Activated CD4-positive, alpha-beta T cell treated with anti-CD3 and anti-CD28 coated beads for 36 hours (primary cell): ENCODE measurements at regions of chr4 and their contacts with region 1.

Region 1: DNA sequence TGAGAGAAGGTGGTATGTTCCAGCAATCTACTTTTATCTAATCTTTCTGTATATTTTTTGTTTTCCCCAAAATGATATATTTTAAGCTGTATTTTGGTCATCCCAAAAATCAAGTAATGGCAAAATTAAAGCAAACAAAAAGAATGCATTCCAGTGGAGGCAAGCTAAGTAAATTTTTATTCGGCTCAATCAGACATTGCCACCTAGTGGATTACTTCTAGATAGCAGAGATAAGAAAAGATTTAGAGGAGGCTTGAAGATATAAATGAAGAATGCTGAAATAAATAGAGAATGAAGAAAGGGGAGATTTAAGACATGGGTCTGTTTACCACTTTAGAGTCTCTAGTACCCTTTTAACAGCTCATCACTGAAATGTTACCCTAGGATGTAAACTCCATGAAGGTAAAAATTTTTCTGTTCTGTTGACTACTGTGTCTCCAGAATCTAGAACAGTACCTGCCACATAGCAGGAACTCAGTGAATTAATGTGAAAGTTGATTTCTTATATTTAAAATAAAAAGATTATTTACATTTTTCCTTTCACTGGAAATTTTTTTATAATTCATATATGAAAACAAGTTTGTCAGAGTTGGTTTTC is 110.9 kb upstream of the ANK2 start:
- DNase-seq: no peak
- ATAC-seq: no peak
- H3K4me3 Mint-ChIP-seq: no peak overlapping the region
- H3K27ac Mint-ChIP-seq: no peak overlapping the region
- H3K4me1 Mint-ChIP-seq: no peaks in the 10 kb centered on the region
- H3K27me3 Mint-ChIP-seq: peaks cover 8% of the 10 kb centered on the region

Region 2: DNA sequence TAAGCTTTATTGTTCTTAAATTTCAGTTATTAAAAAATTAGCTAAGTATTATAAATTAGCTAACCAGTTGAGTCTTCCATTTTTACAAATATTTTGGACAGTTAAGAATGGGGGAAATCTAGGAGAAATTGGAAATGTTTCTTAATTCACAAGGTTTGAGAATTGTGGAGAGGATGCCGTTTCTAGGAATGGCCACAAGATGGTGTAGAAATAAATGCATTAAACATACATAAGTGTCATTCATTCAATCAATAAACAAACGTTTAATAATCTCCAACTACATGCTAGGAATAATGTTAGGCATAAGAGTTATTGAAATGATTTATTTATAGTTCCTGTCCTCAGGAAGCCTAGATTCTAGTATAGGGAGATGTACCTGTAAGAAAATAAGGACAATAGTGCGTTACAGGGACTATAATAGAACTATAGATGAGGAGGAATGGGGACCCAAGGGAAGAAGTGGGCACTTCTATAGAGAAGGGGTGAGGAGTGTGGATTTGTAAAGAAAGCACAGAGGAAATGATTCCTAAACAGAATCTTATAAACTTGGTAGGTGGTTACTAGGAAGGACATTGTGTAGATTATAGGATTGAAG is 84.8 kb before region 1 on chr4:
- CTCF ChIA-PET with region 1: interaction called, 4 read pairs
- POLR2A ChIA-PET with region 1: no interaction called
- intact Hi-C with region 1: loop called in 1 of 2 experiments (anchors 1 kb)
- DNase-seq: no peak
- ATAC-seq: no peak
- H3K4me3 Mint-ChIP-seq: no peak overlapping the region
- H3K27ac Mint-ChIP-seq: no peak overlapping the region
- H3K4me1 Mint-ChIP-seq: no peaks in the 10 kb centered on the region
- H3K27me3 Mint-ChIP-seq: peaks cover 11% of the 10 kb centered on the region

Region 3: DNA sequence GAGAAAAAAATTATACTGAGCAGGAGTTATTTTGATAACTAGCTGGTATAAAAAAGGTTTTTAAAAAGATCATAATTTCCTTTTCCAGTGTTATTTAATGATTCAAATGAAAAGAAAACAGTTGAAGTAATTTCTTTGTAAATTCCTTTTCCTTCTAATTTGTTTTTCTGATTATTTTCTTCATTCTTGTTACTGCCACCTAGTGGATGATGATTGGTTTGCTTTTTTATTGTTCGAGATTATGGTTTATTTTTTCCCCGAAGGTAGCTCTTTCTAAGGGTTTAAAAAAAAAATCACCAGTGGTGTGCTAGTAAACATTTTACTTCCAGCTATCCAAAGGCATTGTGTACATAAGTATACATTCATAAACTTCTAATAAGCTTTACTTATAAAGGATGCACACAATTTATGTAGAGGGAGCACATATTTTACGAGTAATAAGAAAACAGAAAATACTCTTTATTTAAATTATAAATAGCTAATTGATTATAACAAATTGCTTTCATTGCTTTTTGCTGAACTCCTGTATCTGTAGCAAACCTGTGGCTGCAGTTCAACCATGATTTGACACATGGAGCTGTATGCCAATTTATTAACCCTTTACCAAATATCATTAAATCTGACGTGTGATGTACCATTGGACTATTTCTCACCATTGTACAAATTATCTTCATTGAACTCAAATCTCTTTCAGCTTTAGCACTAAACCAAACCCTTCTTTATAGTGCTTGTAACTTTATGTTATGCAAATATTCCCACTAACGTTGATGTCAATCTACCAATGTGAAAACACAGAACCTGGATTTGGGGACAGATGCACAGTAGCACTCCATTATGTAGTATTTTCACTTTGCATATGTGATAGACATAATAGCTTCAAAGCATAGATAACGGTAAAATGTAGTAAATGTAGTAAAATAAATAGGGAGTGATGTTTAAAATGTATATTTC is 13.1 kb after region 1 on chr4:
- CTCF ChIA-PET with region 1: interaction called, 20 read pairs
- POLR2A ChIA-PET with region 1: no interaction called
- intact Hi-C with region 1: no loop called
- DNase-seq: no peak
- ATAC-seq: no peak
- H3K4me3 Mint-ChIP-seq: no peak overlapping the region
- H3K27ac Mint-ChIP-seq: no peak overlapping the region
- H3K4me1 Mint-ChIP-seq: no peaks in the 10 kb centered on the region
- H3K27me3 Mint-ChIP-seq: peaks cover 12% of the 10 kb centered on the region

Region 4: GRCh38 chr4:113316879-113317278 is 378.3 kb after region 1 on chr4:
- CTCF ChIA-PET with region 1: no interaction called
- POLR2A ChIA-PET with region 1: no interaction called
- intact Hi-C with region 1: no loop called
- DNase-seq: peak; percentile 32
- ATAC-seq: peak; percentile 87
- H3K4me3 Mint-ChIP-seq: no peak overlapping the region
- H3K27ac Mint-ChIP-seq: no peak overlapping the region
- H3K4me1 Mint-ChIP-seq: peaks cover 8% of the 10 kb centered on the region
- H3K27me3 Mint-ChIP-seq: peaks cover 3% of the 10 kb centered on the region